IMR-90 (cell line): ENCODE measurements at regions of chr2 and their contacts with region 1.

Region 1: GRCh38 chr2:221817052-221817451 is 244.9 kb upstream of the EPHA4 start:
- DNase-seq: no peak
- ATAC-seq: no peak
- H3K4me3 ChIP-seq: no peak overlapping the region
- H3K27ac ChIP-seq: no peak overlapping the region
- H3K4me1 ChIP-seq: no peaks in the 10 kb centered on the region
- H3K27me3 ChIP-seq: no peaks in the 10 kb centered on the region
- CTCF ChIP-seq: no peak
- POLR2A ChIP-seq: no peak
- RAD21 ChIP-seq: no peak

Region 2: GRCh38 chr2:221844212-221845028 is 27.4 kb after region 1 on chr2:
- CTCF ChIA-PET with region 1: no interaction called
- POLR2A ChIA-PET with region 1: no interaction called
- dilution Hi-C with region 1: no loop called
- in situ Hi-C with region 1: no loop called
- intact Hi-C with region 1: loop called (anchors 1 kb)
- DNase-seq: no peak
- ATAC-seq: no peak
- H3K4me3 ChIP-seq: no peak overlapping the region
- H3K27ac ChIP-seq: no peak overlapping the region
- H3K4me1 ChIP-seq: no peaks in the 10 kb centered on the region
- H3K27me3 ChIP-seq: no peaks in the 10 kb centered on the region
- CTCF ChIP-seq: no peak
- POLR2A ChIP-seq: no peak
- RAD21 ChIP-seq: no peak